Activated naive CD8-positive, alpha-beta T cell treated with anti-CD3 and anti-CD28 coated beads, Interleukin-2, amount 10 ng/mL, durations not matched to agents 7 days and 5 days (primary cell): ENCODE measurements at regions of chr7 and their contacts with region 1.

Region 1: GRCh38 chr7:143263266-143264195 is at the start of gene GSTK1:
- DNase-seq: peak; percentile 83
- ATAC-seq: peak; percentile 99
- H3K4me3 Mint-ChIP-seq: peak within 1 kb of the TSS; percentile 96
- H3K27ac Mint-ChIP-seq: peak within 1 kb of the TSS; percentile 91
- H3K4me1 Mint-ChIP-seq: peaks cover 39% of the 10 kb centered on the region
- H3K27me3 Mint-ChIP-seq: no peaks in the 10 kb centered on the region
- total RNA-seq, gene GSTK1: 355 to 368 TPM

Region 2: DNA sequence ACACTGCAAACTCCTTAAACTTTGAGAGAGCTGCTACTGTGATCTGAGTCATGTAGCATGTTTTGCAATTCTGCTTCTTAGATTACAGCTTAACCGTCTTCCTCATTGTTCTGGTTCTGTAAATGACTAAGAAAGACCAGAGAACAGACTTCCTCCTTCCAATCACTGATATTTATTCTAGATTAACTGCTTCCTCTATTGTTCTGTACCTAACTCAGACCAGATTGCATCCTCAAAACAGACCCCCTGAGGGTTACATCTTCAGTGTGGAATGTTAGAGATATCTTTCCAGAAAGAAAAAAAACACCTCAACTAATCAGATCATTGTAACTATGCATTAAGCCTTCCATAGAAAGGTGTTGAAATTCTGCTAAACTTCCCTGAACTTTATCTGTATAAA is 137.4 kb before region 1 on chr7:
- POLR2A ChIA-PET with region 1: no interaction called
- DNase-seq: no peak
- ATAC-seq: no peak
- H3K4me3 Mint-ChIP-seq: no peak overlapping the region
- H3K27ac Mint-ChIP-seq: no peak overlapping the region
- H3K4me1 Mint-ChIP-seq: no peaks in the 10 kb centered on the region
- H3K27me3 Mint-ChIP-seq: peaks cover 4% of the 10 kb centered on the region

Region 3: DNA sequence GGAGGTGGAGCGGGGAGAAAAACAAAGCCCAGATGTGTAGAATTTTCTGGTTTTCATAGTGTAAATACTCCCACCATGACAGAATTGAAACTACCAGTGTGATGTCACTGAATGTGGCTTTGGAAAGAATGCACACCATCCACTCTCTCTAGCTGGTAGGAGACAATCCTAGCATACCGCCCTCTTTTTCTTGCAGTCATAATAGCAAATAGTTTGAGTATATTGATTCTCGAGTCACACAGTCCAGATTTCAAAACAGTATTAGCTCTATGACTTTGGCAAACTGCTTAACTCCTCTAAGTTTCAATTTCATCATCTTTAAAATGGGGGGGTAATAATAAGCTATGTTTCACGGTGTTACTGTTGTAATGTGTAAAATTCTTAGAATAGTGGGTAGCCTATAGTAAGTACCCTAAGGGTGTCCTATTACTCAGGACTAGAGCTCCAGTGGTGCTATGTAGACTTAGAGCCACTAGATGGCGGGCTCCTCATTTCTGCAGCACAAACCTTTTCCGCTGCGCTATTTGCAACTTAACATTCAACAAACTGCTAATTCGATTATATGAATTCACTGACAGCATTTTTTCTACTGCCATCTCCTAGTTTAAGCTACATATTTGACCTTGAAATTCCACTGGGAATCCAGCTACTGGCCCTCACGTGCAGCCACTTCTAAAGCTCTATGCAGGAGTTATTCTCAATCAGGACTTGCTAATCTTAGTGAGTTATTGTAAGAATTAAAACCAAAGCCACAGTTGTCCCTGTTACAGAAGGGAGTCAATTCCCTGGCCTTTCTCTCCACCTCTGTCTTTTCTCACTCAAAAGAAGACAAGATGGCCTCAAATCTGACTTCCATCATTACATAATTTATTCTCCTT is 23.0 kb before region 1 on chr7:
- POLR2A ChIA-PET with region 1: interaction called, 19 read pairs
- DNase-seq: peak; percentile 58
- ATAC-seq: peak; percentile 72
- H3K4me3 Mint-ChIP-seq: no peak overlapping the region
- H3K27ac Mint-ChIP-seq: no peak overlapping the region
- H3K4me1 Mint-ChIP-seq: peaks cover 25% of the 10 kb centered on the region
- H3K27me3 Mint-ChIP-seq: peaks cover 10% of the 10 kb centered on the region

Region 4: GRCh38 chr7:143250822-143251221 is 12.7 kb before region 1 on chr7:
- POLR2A ChIA-PET with region 1: interaction called, 19 read pairs
- DNase-seq: no peak
- ATAC-seq: peak; percentile 62
- H3K4me3 Mint-ChIP-seq: peak overlapping the region; percentile 50
- H3K27ac Mint-ChIP-seq: peak overlapping the region; percentile 68
- H3K4me1 Mint-ChIP-seq: peaks cover 56% of the 10 kb centered on the region
- H3K27me3 Mint-ChIP-seq: no peaks in the 10 kb centered on the region

Region 5: GRCh38 chr7:143279186-143280098 is 15.9 kb after region 1 on chr7:
- POLR2A ChIA-PET with region 1: interaction called, 45 read pairs
- DNase-seq: no peak
- ATAC-seq: peak; percentile 50
- H3K4me3 Mint-ChIP-seq: peak overlapping the region; percentile 73
- H3K27ac Mint-ChIP-seq: peak overlapping the region; percentile 82
- H3K4me1 Mint-ChIP-seq: peaks cover 31% of the 10 kb centered on the region
- H3K27me3 Mint-ChIP-seq: no peaks in the 10 kb centered on the region

Region 6: GRCh38 chr7:143287935-143288826 is 24.6 kb after region 1 on chr7 and contains the start of gene CASP2:
- POLR2A ChIA-PET with region 1: interaction called, 29 read pairs
- DNase-seq: peak; percentile 100
- ATAC-seq: peak; percentile 97
- H3K4me3 Mint-ChIP-seq: peak within 1 kb of the TSS; percentile 85
- H3K27ac Mint-ChIP-seq: peak within 1 kb of the TSS; percentile 92
- H3K4me1 Mint-ChIP-seq: peaks cover 42% of the 10 kb centered on the region
- H3K27me3 Mint-ChIP-seq: no peaks in the 10 kb centered on the region
- total RNA-seq, gene CASP2: 96.5 to 98.8 TPM

Region 7: DNA sequence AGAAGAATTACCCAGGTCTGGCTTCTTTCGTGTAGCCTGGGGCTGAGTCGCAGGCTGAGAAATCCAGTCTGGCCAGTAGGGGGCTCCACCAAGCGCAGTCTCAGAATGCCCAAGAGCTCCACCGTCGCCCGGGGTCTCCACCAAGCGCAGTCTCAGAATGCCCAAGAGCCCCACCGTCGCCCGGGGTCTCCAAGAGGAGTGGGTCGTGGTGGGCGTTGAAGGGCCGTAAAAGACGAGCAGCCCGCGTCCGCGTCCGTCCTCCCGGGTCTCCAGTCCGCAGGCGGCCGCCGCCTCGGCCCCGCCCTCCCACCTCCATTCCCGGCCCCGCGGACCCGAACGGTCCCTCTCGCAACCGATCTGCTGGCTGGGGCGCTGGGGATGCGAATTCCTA is 116.7 kb after region 1 on chr7:
- POLR2A ChIA-PET with region 1: interaction called, 10 read pairs
- DNase-seq: peak; percentile 90
- ATAC-seq: peak; percentile 49
- H3K4me3 Mint-ChIP-seq: peak overlapping the region; percentile 86
- H3K27ac Mint-ChIP-seq: peak overlapping the region; percentile 92
- H3K4me1 Mint-ChIP-seq: peaks cover 46% of the 10 kb centered on the region
- H3K27me3 Mint-ChIP-seq: no peaks in the 10 kb centered on the region